ENCODE measurements at regions of chr16 and their contacts with region 1.

Region 1: GRCh38 chr16:12095275-12096156 is 119.0 kb downstream of the SNX29 start:
- DNase-seq: peak in 4 of 5 donors; percentile 50 to 55 (median 52)
- H3K4me3 ChIP-seq: no peak overlapping the region
- H3K4me3 Mint-ChIP-seq: peak overlapping the region in 7 of 8 donors; percentile 61 to 88 (median 70)
- H3K27ac ChIP-seq: no peak overlapping the region
- H3K27ac Mint-ChIP-seq: peak overlapping the region in 5 of 7 donors; percentile 7 to 73 (median 26)
- H3K4me1 ChIP-seq: peaks cover 10% of the 10 kb centered on the region
- H3K4me1 Mint-ChIP-seq: peaks cover 7 to 29% (median 11%) of the 10 kb centered on the region in 4 donors
- H3K27me3 ChIP-seq: no peaks in the 10 kb centered on the region
- H3K27me3 Mint-ChIP-seq: no peaks in the 10 kb centered on the region

Region 2: GRCh38 chr16:12062343-12063005 is 33.0 kb before region 1 on chr16:
- CTCF ChIA-PET with region 1: interaction called, 54 read pairs
- POLR2A ChIA-PET with region 1: interaction called, 8 read pairs
- intact Hi-C with region 1: no loop called
- DNase-seq: no peak
- H3K4me3 ChIP-seq: no peak overlapping the region
- H3K4me3 Mint-ChIP-seq: no peak overlapping the region
- H3K27ac ChIP-seq: no peak overlapping the region
- H3K27ac Mint-ChIP-seq: peak overlapping the region in 3 of 7 donors; percentile 18 to 36 (median 29)
- H3K4me1 ChIP-seq: no peaks in the 10 kb centered on the region
- H3K4me1 Mint-ChIP-seq: peaks cover 4 to 9% (median 6%) of the 10 kb centered on the region in 4 donors
- H3K27me3 ChIP-seq: no peaks in the 10 kb centered on the region
- H3K27me3 Mint-ChIP-seq: no peaks in the 10 kb centered on the region

Region 3: DNA sequence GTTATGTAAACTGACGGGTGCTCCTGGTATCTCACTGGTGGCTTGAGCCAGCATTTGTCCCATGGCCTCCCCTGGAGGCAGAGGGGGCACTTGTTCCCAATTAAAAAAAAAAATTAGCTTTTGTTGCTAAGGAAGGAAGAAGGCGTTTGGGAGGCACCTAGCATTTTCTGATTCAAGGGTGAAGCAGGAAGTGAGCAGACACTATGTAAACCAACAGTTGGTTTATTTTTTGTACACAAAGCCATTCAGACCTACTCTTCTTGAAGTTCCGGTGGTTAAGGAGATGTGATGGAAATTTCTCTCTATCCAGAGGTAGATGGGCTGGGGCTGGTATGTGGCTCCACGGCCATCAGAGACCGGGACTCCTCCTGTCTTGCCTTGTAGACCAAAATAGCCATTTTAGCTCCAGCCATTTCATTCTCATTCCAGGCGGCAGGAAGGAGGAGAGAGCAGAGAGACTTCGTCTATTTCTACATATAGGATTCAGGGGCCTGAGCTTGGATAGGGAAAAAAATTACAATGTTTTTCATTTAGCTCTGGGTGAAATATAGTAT is 16.0 kb before region 1 on chr16:
- CTCF ChIA-PET with region 1: interaction called, 131 read pairs
- POLR2A ChIA-PET with region 1: interaction called, 16 read pairs
- intact Hi-C with region 1: loop called (anchors 2 kb)
- DNase-seq: peak in 4 of 5 donors; percentile 17 to 49 (median 43)
- H3K4me3 ChIP-seq: peak overlapping the region; percentile 2 to 6
- H3K4me3 Mint-ChIP-seq: peak overlapping the region; percentile 71 to 91 (median 84)
- H3K27ac ChIP-seq: peak overlapping the region; percentile 58
- H3K27ac Mint-ChIP-seq: peak overlapping the region; percentile 91 to 99 (median 97)
- H3K4me1 ChIP-seq: peaks cover 71% of the 10 kb centered on the region
- H3K4me1 Mint-ChIP-seq: peaks cover 51 to 89% (median 67%) of the 10 kb centered on the region in 4 donors
- H3K27me3 ChIP-seq: no peaks in the 10 kb centered on the region
- H3K27me3 Mint-ChIP-seq: no peaks in the 10 kb centered on the region

Region 4: DNA sequence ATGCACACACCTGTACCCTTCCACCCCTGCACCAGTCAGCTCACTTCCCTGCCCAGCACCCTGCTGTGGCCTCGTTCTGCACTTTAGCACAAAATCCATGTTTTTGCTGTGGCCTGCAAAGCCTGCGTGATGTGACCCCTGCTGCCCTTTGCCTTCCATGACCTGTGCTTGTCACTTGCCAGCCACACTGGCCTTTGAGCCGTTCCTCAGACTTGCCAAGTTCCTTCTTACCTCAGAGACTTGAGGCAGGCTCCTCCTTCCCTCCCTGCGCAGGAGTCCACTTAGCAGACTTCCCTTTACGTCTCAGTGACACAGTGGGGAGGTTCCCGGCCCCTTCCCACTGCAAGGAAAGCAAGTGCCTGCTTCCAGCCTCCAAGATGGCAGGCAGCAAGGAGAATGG is 15.7 kb after region 1 on chr16:
- CTCF ChIA-PET with region 1: interaction called, 45 read pairs
- POLR2A ChIA-PET with region 1: interaction called, 3 read pairs
- intact Hi-C with region 1: no loop called
- DNase-seq: no peak
- H3K4me3 ChIP-seq: no peak overlapping the region
- H3K4me3 Mint-ChIP-seq: no peak overlapping the region
- H3K27ac ChIP-seq: no peak overlapping the region
- H3K27ac Mint-ChIP-seq: peak overlapping the region in 1 of 7 donors; percentile 8
- H3K4me1 ChIP-seq: no peaks in the 10 kb centered on the region
- H3K4me1 Mint-ChIP-seq: peaks cover 0 to 4% (median under 1%) of the 10 kb centered on the region in 4 donors
- H3K27me3 ChIP-seq: no peaks in the 10 kb centered on the region
- H3K27me3 Mint-ChIP-seq: no peaks in the 10 kb centered on the region

Region 5: DNA sequence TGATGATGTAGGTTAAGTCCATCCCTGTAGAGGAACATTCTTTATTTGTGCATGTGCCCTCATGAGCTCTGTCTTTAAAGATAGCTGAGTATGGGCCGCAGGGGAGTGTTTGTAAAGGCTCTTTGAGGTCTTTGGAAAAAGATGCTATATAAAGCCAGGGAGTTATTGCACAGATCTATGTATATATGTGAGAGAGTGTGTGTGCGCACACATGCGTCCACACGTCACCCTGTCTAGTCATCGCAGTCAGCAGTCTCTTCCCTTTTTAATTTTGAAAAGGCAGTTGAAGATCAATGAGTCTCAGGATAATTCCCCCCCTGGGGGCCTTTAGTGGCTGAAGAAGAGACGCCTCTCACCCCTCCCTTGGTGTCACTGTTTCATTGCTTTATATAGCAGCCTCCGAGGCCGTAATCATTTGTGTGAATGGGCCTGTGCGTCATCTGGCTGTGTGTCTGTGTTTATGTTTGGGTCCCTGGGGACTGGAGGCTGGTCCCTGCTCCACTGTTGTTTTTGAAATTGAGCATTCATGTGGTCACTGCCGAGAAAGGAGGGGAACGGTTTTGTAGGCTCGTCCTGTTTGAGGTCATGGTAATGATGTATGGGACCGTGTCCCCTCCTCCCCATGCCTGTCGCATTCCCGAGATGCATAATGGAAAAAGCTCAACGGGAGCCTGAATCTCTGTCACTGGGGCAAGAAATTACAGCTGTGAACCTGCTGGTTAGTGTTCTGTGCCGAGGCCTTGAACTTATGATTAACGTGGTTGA is 24.9 kb after region 1 on chr16:
- CTCF ChIA-PET with region 1: interaction called, 10 read pairs
- POLR2A ChIA-PET with region 1: interaction called, 3 read pairs
- intact Hi-C with region 1: no loop called
- DNase-seq: no peak
- H3K4me3 ChIP-seq: no peak overlapping the region
- H3K4me3 Mint-ChIP-seq: no peak overlapping the region
- H3K27ac ChIP-seq: no peak overlapping the region
- H3K27ac Mint-ChIP-seq: peak overlapping the region in 1 of 7 donors; percentile 44
- H3K4me1 ChIP-seq: no peaks in the 10 kb centered on the region
- H3K4me1 Mint-ChIP-seq: peaks cover 0 to 12% (median 8%) of the 10 kb centered on the region in 4 donors
- H3K27me3 ChIP-seq: no peaks in the 10 kb centered on the region
- H3K27me3 Mint-ChIP-seq: no peaks in the 10 kb centered on the region

Region 6: DNA sequence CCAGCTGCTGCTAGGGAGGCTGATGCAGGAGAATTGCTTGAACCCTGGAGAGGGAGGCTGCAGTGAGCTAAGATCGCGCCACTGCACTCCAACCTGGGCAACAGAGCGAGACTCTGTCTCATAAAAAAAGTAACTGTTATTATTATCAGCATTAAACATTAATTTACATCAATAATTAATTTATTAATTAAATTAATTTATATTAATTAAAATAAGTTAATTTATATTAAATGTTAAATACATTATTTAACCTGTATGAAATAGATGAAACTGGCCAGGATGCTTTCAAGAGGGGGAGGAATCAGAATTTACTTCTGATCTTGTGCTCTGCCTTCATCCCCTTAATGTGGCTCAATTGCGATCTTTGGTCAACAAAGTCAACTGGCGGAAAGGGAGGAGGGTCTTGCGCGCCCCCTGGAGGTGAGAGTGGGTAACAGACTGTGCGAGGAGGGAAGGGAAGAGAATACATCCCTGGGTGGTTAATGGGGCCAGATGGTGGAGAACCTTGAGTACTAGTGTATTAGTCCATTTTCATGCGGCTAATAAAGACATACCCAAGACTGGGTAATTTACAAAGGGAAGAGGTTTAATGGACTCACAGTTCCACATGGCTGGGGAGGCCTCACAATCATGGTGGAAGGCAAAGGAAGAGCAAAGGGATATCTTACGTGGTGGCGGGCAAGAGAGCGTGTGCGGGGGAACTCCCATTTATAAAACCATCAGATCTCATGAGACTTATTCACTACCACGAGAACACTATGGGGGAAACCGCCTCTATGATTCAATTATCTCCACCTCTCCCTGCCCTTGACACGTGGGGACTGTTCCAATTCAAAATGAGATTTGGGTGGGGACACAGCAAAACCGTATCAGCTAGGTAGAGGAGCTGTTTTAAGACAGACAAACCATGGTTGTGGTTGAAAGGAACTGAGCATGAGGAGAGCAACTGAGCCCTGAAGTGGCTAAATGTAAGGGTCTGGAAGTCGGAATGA is 723.9 kb after region 1 on chr16:
- CTCF ChIA-PET with region 1: interaction called, 38 read pairs
- POLR2A ChIA-PET with region 1: interaction called, 3 read pairs
- intact Hi-C with region 1: loop called (anchors 1 kb)
- DNase-seq: peak; percentile 51 to 67 (median 62)
- H3K4me3 ChIP-seq: no peak overlapping the region
- H3K4me3 Mint-ChIP-seq: no peak overlapping the region
- H3K27ac ChIP-seq: no peak overlapping the region
- H3K27ac Mint-ChIP-seq: no peak overlapping the region
- H3K4me1 ChIP-seq: no peaks in the 10 kb centered on the region
- H3K4me1 Mint-ChIP-seq: peaks cover 3 to 5% (median 3%) of the 10 kb centered on the region in 4 donors
- H3K27me3 ChIP-seq: no peaks in the 10 kb centered on the region
- H3K27me3 Mint-ChIP-seq: peaks cover 2 to 5% of the 10 kb centered on the region in 2 donors

Measured in CD4-positive, alpha-beta memory T cell (primary cell).